ENCODE measurements at regions of chr15 and their contacts with region 1.

Region 1: GRCh38 chr15:77659350-77660321 is 26.9 kb upstream of the LINGO1 start:
- DNase-seq: peak; percentile 34
- ATAC-seq: peak; percentile 89
- H3K4me3 ChIP-seq: no peak overlapping the region
- H3K27ac ChIP-seq: no peak overlapping the region
- H3K4me1 ChIP-seq: peaks cover 2 to 10% of the 10 kb centered on the region in 2 experiments; a peak in 3 of 4 replicates
- H3K27me3 ChIP-seq: no peaks in the 10 kb centered on the region
- CTCF ChIP-seq: peak; percentile 46 to 61 (median 56); a peak in 5 of 6 replicates
- POLR2A ChIP-seq: no peak
- RAD21 ChIP-seq: peak; percentile 50

Region 2: DNA sequence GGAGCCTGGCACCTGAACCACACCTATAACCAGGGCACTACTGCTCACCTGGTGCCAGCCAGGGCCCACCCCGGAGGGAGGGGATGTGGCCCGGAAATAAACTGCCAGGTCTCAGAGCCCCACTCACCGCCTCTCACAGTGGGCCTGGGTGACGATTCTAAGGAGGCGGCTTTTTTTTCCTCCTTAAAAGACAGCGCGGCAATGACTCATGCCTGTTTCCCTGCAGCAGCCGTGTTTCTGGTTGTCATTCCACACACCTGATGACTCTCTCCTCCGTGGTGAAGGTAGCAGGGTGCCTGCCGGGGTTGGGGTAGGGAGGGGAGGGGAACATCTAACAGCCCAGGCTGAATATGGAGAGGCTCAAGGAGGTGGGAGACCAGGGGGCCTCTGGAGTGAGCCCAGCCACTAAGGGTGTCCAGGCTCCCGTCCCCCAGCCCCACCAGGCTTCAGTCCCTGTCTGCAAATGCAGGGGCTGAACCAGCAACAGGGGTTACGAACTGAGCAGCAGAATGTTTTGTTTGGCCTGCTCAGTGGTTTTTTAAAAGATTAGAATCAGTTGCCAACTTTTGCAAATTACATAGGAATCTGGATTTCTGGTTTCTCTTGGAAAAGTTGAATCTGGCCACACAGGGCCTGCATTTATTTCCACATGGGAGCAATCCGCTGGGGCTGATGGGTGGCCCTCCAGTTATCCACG is 100.4 kb after region 1 on chr15:
- CTCF ChIA-PET with region 1: no interaction called
- POLR2A ChIA-PET with region 1: no interaction called
- RAD21 ChIA-PET with region 1: no interaction called
- intact Hi-C with region 1: no loop called
- DNase-seq: peak; percentile 13
- ATAC-seq: peak; percentile 83
- H3K4me3 ChIP-seq: no peak overlapping the region; a peak in 1 of 4 replicates
- H3K27ac ChIP-seq: no peak overlapping the region
- H3K4me1 ChIP-seq: peaks cover 11 to 16% of the 10 kb centered on the region in 2 experiments
- H3K27me3 ChIP-seq: no peaks in the 10 kb centered on the region
- CTCF ChIP-seq: no peak
- POLR2A ChIP-seq: no peak
- RAD21 ChIP-seq: no peak

Region 3: GRCh38 chr15:77784395-77785292 is 125.0 kb after region 1 on chr15:
- CTCF ChIA-PET with region 1: interaction called, 3 read pairs
- POLR2A ChIA-PET with region 1: no interaction called
- RAD21 ChIA-PET with region 1: interaction called in 1 of 2 experiments, 3 read pairs
- intact Hi-C with region 1: loop called (anchors 1 kb)
- DNase-seq: peak; percentile 23
- ATAC-seq: peak; percentile 93
- H3K4me3 ChIP-seq: no peak overlapping the region
- H3K27ac ChIP-seq: no peak overlapping the region
- H3K4me1 ChIP-seq: no peaks in the 10 kb centered on the region
- H3K27me3 ChIP-seq: no peaks in the 10 kb centered on the region
- CTCF ChIP-seq: peak; percentile 61 to 77 (median 76)
- POLR2A ChIP-seq: no peak
- RAD21 ChIP-seq: peak; percentile 52

Region 4: DNA sequence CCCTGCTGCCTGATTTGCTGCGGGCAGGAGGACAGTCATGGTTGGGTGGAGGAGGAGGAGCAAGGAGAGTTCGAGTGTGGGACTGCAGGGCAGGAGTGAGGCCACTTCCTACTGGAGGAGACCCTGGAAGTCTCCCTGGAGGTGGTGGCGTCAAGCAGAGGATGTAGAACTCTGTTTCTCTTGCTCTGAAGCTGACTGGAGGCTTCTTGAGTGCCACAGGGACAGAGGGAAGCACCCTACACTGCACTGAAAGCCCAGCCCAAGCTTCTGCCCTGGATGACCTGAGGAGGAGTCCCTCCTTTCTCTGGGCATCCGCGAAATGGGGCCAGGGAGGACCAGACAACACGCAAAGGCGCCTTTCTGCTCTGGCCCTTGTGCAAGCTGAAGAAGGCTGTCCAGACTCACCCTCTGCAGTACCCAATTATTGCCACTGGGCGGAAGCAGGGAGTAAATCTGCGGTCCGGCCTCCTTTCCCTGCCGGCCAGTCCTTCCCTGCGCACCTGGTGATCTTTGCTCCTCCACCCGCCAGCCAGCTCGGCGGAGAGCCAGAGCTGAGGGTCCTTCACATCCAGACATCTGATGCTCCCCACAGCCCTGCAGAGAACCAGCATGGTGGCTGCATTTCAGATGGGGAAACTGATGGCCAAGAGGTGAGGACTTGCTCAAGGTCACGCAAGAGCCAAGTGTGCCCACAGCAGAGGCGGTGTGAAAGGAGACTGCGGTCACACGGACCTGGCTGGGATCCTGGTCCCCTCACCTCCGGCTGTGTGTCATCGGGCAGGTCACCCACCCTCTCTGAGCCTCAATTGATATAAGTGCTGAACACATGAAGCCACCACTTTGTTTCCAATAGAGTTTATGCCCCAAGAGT is 210.8 kb after region 1 on chr15:
- CTCF ChIA-PET with region 1: interaction called, 4 read pairs
- POLR2A ChIA-PET with region 1: no interaction called
- RAD21 ChIA-PET with region 1: no interaction called
- intact Hi-C with region 1: loop called (anchors 5 kb)
- DNase-seq: peak; percentile 59
- ATAC-seq: peak; percentile 86
- H3K4me3 ChIP-seq: no peak overlapping the region
- H3K27ac ChIP-seq: no peak overlapping the region
- H3K4me1 ChIP-seq: peaks cover 0 to 7% of the 10 kb centered on the region in 2 experiments; a peak in 1 of 4 replicates
- H3K27me3 ChIP-seq: no peaks in the 10 kb centered on the region
- CTCF ChIP-seq: peak; percentile 42 to 70 (median 70); a peak in 5 of 6 replicates
- POLR2A ChIP-seq: no peak
- RAD21 ChIP-seq: peak; percentile 47

Measured in HCT116 (cell line).